T-cell (primary cell): ENCODE measurements at regions of chr2 and their contacts with region 1.

Region 1: GRCh38 chr2:28821295-28821958 is 10.8 kb downstream of the SPDYA start:
- DNase-seq: peak in 31 of 35 experiments; percentile 6 to 83 (median 41)
- ATAC-seq: peak; percentile 68 to 83 (median 80)
- H3K4me3 ChIP-seq: no peak overlapping the region
- H3K4me3 Mint-ChIP-seq: no peak overlapping the region
- H3K27ac ChIP-seq: no peak overlapping the region
- H3K27ac Mint-ChIP-seq: no peak overlapping the region
- H3K4me1 ChIP-seq: peaks cover 0 to 4% of the 10 kb centered on the region in 2 experiments
- H3K4me1 Mint-ChIP-seq: peaks cover 3 to 4% (median 4%) of the 10 kb centered on the region in 3 donors
- H3K27me3 ChIP-seq: no peaks in the 10 kb centered on the region
- H3K27me3 Mint-ChIP-seq: no peaks in the 10 kb centered on the region

Region 2: DNA sequence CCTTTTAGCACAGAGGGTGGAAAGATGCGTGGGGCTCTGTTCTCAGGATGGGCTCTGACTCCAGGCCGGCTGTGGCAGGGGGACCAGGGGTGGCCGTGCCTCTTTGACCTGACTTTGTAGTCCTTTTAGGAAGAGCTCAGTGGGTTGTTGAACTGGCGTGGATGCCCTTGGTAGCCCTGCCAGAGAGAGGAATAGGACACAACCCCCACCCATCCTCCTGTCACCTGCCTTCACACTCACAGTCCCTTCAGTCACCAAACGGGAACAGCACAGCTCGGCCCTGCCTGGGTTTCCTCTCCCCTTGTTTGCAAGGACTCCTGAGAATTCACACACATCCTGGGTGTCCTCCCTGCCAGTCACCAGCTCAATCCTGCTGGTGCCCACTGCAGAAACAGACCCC is 1070.1 kb before region 1 on chr2:
- CTCF ChIA-PET with region 1: no interaction called
- POLR2A ChIA-PET with region 1: interaction called in 1 of 2 experiments, 14 read pairs
- DNase-seq: no peak
- ATAC-seq: no peak
- H3K4me3 ChIP-seq: no peak overlapping the region
- H3K4me3 Mint-ChIP-seq: no peak overlapping the region
- H3K27ac ChIP-seq: no peak overlapping the region
- H3K27ac Mint-ChIP-seq: no peak overlapping the region
- H3K4me1 ChIP-seq: no peaks in the 10 kb centered on the region
- H3K4me1 Mint-ChIP-seq: no peaks in the 10 kb centered on the region
- H3K27me3 ChIP-seq: peaks cover 0 to 23% of the 10 kb centered on the region in 2 experiments
- H3K27me3 Mint-ChIP-seq: peaks cover 6 to 16% of the 10 kb centered on the region in 2 donors

Region 3: DNA sequence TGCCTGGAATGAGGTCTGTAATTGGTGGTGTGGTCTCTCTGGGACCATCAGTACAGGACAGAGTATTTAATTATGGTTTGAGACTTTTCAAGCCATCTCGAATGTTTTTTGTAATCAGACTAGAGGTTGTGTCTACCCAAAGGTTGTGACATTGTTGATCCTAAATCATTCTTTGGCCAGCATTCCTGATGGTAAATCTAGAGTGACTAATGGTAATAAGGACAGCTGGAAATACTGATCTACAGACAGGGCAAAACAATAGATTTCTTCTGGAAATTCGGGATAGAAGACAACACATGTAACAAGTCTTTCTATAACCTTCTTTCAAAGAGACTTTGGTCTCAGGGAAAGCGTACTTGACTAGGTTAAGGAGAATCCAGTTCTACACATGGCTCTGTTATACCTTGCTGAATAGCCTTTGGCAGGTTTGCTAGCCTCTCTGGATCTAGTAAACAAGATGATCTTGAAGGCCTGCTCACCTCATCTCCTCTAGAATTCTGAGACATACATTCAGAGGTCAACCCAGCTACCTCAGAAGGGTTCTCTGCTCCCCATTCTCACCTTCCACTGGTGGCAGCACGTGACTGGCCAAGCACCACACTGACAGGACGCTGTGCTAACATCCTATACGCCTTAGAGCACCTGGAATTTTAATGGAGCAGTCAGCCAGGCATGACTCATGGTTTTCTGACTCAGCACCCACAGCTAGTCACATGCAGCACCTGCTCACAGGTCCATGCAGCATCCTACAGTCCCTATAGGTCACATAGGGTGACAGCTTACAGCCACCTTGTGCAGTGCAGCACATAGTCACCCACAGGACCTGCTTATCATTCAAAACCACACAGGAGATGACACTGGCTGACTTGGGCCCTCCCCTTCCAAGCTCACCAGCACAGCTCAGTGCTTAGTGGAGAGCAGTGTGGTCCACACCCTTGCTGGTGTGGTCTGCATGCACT is 313.3 kb before region 1 on chr2:
- CTCF ChIA-PET with region 1: no interaction called
- POLR2A ChIA-PET with region 1: no interaction called
- DNase-seq: peak in 27 of 35 experiments; percentile 2 to 43 (median 16)
- ATAC-seq: peak; percentile 48 to 75 (median 70)
- H3K4me3 ChIP-seq: no peak overlapping the region
- H3K4me3 Mint-ChIP-seq: no peak overlapping the region
- H3K27ac ChIP-seq: no peak overlapping the region
- H3K27ac Mint-ChIP-seq: no peak overlapping the region
- H3K4me1 ChIP-seq: peaks cover 0 to 6% of the 10 kb centered on the region in 2 experiments
- H3K4me1 Mint-ChIP-seq: peaks cover 0 to 9% (median 5%) of the 10 kb centered on the region in 3 donors
- H3K27me3 ChIP-seq: no peaks in the 10 kb centered on the region
- H3K27me3 Mint-ChIP-seq: peaks cover 2 to 5% of the 10 kb centered on the region in 2 donors

Region 4: DNA sequence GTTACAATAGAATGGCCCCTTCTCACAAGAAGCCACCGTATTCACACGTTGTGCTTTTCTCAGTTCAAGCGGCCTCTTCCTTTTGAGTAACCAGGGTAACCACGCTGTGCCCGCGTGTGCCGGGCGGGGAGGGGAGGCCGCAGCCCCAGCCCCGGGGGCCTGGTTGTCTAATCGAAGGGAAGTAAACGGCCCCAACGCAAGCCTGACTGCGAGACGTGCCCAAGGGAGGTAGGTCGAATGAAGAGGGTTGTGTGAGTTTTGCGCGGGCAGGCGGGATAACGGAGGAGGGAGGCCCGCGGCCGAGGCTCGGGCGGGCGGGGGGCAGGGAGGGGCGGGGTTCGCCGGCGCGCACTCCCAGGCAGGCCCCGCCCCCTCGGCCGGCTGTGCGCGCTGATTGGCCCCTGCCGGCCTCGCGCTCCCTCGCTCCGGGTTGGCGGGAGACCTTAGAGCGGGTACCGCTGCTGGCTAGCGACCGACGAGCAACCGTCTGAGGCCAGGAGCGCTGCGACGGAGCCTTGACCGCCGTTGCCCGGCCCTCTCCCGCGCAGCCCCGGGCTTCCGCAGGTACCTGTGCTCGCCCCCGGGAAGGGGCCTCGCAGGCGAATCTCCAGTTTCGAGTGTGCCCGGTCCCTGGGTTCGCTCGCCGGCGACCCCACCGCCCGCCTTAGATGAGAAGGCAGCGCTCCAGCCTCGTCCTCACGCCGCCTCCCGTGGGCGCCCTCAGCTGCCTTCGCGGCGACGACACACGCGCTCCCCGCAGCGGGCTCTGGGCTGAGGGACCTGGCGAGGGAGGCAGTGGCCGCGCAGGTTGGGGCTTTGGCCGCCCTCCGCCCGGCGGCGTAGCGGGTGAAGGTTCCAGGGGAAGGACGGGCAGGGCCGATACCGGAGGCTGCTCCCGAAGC is 10.8 kb before region 1 on chr2 and contains the start of gene SPDYA:
- CTCF ChIA-PET with region 1: interaction called, 3 to 18 read pairs
- POLR2A ChIA-PET with region 1: no interaction called
- DNase-seq: peak; percentile 52 to 88 (median 70)
- ATAC-seq: peak; percentile 84 to 96 (median 96)
- H3K4me3 ChIP-seq: peak within 1 kb of the TSS; percentile 57 to 66
- H3K4me3 Mint-ChIP-seq: peak within 1 kb of the TSS; percentile 77 to 80 (median 79)
- H3K27ac ChIP-seq: no peak within 1 kb of the TSS
- H3K27ac Mint-ChIP-seq: peak within 1 kb of the TSS in 1 of 2 donors; percentile 64
- H3K4me1 ChIP-seq: peaks cover 3 to 19% of the 10 kb centered on the region in 2 experiments
- H3K4me1 Mint-ChIP-seq: peaks cover 6 to 17% (median 17%) of the 10 kb centered on the region in 3 donors
- H3K27me3 ChIP-seq: no peaks in the 10 kb centered on the region
- H3K27me3 Mint-ChIP-seq: no peaks in the 10 kb centered on the region
- total RNA-seq, gene SPDYA: 2.2 to 13.3 (median 3.0) TPM

Region 5: DNA sequence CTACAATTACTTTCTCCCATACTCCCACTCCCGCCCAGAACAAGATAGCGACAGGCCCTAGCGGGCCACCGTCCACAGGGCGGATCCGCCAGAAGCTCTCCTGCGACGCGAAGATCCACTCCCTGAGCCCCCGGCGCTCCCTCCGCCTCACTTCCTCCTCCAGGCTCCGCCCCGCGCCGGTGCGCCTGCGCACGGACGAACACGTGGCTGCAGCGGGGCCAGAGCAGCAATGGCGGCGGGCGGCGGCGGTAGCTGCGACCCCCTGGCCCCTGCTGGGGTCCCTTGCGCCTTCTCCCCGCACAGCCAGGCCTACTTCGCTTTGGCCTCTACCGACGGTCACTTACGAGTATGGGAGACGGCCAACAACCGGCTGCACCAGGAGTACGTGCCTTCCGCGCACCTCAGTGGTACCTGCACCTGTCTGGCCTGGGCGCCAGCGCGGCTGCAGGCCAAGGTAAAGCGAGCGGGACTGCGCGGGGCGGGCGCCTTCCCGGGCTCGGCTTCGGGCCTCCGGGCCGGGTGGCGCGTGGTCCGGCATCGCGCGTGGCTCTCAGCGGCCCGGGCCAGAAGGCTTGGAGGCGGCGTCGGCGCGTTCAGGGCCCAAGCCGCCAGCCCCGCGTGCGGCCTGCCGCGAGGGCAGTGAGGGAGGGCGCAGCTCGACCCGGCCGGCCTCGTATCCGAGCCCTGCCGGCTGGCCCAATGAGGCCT is 73.2 kb after region 1 on chr2 and contains the start of gene WDR43:
- CTCF ChIA-PET with region 1: interaction called in 1 of 2 experiments, 4 read pairs
- POLR2A ChIA-PET with region 1: interaction called in 1 of 2 experiments, 10 read pairs
- DNase-seq: peak; percentile 93 to 99 (median 97)
- ATAC-seq: peak; percentile 94 to 98 (median 96)
- H3K4me3 ChIP-seq: peak within 1 kb of the TSS; percentile 91 to 92
- H3K4me3 Mint-ChIP-seq: peak within 1 kb of the TSS; percentile 91 to 99 (median 98)
- H3K27ac ChIP-seq: peak within 1 kb of the TSS; percentile 72
- H3K27ac Mint-ChIP-seq: peak within 1 kb of the TSS; percentile 86 to 87
- H3K4me1 ChIP-seq: peaks cover 17 to 25% of the 10 kb centered on the region in 2 experiments
- H3K4me1 Mint-ChIP-seq: peaks cover 43 to 45% (median 45%) of the 10 kb centered on the region in 3 donors
- H3K27me3 ChIP-seq: no peaks in the 10 kb centered on the region
- H3K27me3 Mint-ChIP-seq: no peaks in the 10 kb centered on the region
- total RNA-seq, gene WDR43: 58.0 to 68.4 (median 62.9) TPM